ENCODE measurements at regions of chr16 and their contacts with region 1.

Region 1: DNA sequence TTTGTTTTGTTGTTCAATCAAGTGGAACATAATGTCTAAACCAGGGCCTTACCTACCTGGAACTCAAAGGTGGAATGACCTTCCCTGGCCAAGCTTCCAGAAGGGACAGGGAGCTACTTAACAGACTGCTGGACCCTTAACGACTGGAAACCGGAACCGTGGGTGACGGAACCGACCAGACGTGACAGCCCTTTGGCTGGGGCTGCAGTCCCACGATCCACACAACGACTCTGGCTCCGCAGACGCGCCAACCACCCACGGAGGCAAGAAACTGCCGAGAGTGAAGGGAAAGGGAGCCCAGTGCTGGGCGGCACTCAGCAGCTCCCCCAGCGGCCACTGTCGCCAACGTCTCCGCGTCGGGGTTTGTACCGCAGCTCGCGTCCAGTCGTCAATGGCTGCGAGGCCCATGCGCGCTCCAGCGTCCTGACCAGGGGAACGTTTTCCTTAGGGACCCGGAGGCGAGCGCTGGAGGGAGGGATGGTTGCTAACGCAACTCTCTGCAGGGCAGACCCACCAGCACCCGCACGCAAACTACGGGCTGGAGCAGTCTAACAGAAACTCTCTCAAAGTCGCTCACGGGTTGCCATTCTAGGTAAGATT is 5.5 kb upstream of the KIF22 start:
- DNase-seq: peak; percentile 70 to 77 (median 74)
- H3K4me3 ChIP-seq: peak overlapping the region in 1 of 2 donors; percentile 44
- H3K4me3 Mint-ChIP-seq: peak overlapping the region; percentile 57 to 86 (median 78)
- H3K27ac ChIP-seq: peak overlapping the region; percentile 47
- H3K27ac Mint-ChIP-seq: peak overlapping the region; percentile 33 to 92 (median 87)
- H3K4me1 ChIP-seq: peaks cover 25% of the 10 kb centered on the region
- H3K4me1 Mint-ChIP-seq: peaks cover 12 to 30% (median 24%) of the 10 kb centered on the region in 4 donors
- H3K27me3 ChIP-seq: no peaks in the 10 kb centered on the region
- H3K27me3 Mint-ChIP-seq: no peaks in the 10 kb centered on the region

Region 2: DNA sequence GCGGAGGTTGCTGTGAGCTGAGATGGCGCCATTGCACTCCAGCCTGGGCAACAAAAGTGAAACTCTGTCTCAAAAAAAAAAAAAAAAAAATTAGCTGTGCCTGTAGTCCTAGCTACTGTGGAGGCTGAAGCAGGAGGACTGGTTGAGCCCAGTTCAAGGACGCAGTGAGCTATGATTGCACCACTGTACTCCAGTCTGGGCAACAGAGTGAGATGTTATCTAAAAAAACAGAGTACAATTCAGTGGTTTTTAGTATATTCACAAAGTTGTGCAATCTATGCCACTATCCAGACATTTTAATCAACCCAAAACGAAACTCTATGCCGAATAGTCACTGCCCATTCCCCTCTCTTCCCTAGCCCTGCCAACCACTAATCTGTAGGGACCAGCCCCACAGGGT is 64.3 kb before region 1 on chr16:
- CTCF ChIA-PET with region 1: interaction called, 18 read pairs
- POLR2A ChIA-PET with region 1: interaction called, 7 read pairs
- intact Hi-C with region 1: no loop called
- DNase-seq: no peak
- H3K4me3 ChIP-seq: no peak overlapping the region
- H3K4me3 Mint-ChIP-seq: no peak overlapping the region
- H3K27ac ChIP-seq: no peak overlapping the region
- H3K27ac Mint-ChIP-seq: no peak overlapping the region
- H3K4me1 ChIP-seq: no peaks in the 10 kb centered on the region
- H3K4me1 Mint-ChIP-seq: peaks cover 10 to 14% (median 10%) of the 10 kb centered on the region in 4 donors
- H3K27me3 ChIP-seq: no peaks in the 10 kb centered on the region
- H3K27me3 Mint-ChIP-seq: no peaks in the 10 kb centered on the region

Region 3: DNA sequence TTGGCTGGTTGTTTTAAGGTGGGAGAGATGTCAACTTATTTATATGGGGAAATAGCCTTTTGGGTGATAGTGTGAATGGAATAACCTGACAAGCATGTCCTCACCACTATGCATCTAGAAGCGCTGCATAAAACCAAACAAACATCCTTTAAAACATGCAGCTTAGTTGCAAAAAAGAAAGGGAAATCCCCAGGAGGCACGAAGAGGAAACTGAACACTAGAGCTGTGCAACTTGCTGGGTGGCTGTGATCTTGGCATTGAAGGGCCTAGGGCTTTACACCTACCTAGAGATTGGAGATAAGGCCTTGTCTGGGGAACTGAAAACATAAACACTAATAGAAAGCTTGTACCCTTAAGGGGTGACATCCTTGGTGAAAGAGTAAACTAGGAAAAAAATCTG is 46.5 kb before region 1 on chr16:
- CTCF ChIA-PET with region 1: interaction called, 53 read pairs
- POLR2A ChIA-PET with region 1: interaction called, 183 read pairs
- intact Hi-C with region 1: no loop called
- DNase-seq: peak; percentile 80 to 87 (median 84)
- H3K4me3 ChIP-seq: no peak overlapping the region
- H3K4me3 Mint-ChIP-seq: peak overlapping the region; percentile 3 to 73 (median 68)
- H3K27ac ChIP-seq: peak overlapping the region; percentile 62
- H3K27ac Mint-ChIP-seq: peak overlapping the region; percentile 90 to 100 (median 94)
- H3K4me1 ChIP-seq: peaks cover 81% of the 10 kb centered on the region
- H3K4me1 Mint-ChIP-seq: peaks cover 63 to 91% (median 74%) of the 10 kb centered on the region in 4 donors
- H3K27me3 ChIP-seq: no peaks in the 10 kb centered on the region
- H3K27me3 Mint-ChIP-seq: no peaks in the 10 kb centered on the region

Region 4: DNA sequence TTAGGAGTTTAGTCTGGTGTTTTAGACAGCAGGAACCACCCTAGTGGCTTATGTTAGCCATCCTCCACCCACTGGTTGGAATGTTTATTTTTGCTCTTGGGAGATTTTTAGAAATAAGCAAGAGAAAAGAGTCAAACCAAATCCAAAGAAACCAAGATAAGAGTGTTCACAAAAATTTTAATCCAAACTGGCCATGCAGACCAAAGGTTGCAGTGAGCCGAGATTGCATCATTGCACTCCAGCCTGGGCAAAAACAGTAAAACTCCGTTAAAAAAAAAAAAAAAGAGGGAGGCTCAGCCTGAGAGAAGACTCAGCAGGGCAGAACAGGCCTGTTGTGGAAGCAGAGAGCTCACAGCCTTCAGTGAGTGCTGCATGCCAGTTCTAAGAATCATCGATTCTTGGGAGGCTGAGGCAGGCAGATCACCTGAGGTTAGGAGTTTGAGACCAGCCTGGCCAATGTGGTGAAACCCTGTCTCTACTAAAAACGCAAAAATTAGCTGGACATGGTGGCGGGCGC is 27.0 kb before region 1 on chr16:
- CTCF ChIA-PET with region 1: interaction called, 35 read pairs
- POLR2A ChIA-PET with region 1: interaction called, 28 read pairs
- intact Hi-C with region 1: no loop called
- DNase-seq: no peak
- H3K4me3 ChIP-seq: no peak overlapping the region
- H3K4me3 Mint-ChIP-seq: no peak overlapping the region
- H3K27ac ChIP-seq: no peak overlapping the region
- H3K27ac Mint-ChIP-seq: peak overlapping the region in 3 of 7 donors; percentile 6 to 75 (median 46)
- H3K4me1 ChIP-seq: peaks cover 23% of the 10 kb centered on the region
- H3K4me1 Mint-ChIP-seq: peaks cover 19 to 43% (median 27%) of the 10 kb centered on the region in 4 donors
- H3K27me3 ChIP-seq: no peaks in the 10 kb centered on the region
- H3K27me3 Mint-ChIP-seq: no peaks in the 10 kb centered on the region

Measured in CD4-positive, alpha-beta memory T cell (primary cell).